Cardiac septum (tissue), 1 donor: ENCODE measurements at regions of chr16 and their contacts with region 1.

Region 1: GRCh38 chr16:2023098-2023925 is 3.4 kb upstream of the NHERF2 start:
- DNase-seq: peak; percentile 98

Region 2: DNA sequence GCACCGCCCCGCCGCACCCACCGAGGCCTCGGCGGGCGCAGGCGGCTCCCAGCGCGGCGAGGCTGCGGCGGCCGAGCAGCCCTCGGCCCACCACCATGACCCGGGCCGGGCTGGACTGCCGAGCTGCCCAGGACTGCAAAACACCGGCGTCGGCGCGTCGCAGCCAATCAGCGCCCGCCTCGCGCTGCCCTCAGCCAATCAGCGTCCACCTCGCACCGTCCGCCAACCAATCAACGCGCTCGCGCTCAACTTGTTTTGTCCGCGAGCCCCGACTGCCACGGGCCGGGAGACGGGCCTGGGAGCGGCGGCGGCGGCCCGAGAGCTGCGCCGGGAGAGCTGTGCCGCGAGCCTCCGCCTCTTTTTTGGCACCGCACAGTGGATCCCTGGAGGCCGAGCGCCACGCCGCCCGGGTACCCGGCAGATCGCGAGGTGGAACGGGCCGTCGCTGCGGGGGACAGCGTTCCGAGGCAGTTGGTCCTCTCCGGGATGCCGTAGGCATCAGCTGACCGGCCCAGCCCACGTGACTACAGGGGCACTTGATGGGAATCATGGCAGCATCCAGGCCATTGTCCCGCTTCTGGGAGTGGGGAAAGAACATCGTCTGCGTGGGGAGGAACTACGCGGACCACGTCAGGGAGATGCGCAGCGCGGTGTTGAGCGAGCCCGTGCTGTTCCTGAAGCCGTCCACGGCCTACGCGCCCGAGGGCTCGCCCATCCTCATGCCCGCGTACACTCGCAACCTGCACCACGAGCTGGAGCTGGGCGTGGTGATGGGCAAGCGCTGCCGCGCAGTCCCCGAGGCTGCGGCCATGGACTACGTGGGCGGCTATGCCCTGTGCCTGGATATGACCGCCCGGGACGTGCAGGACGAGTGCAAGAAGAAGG is 196.4 kb before region 1 on chr16 and contains the starts of genes FAHD1 and HAGH:
- intact Hi-C with region 1: no loop called
- DNase-seq: peak; percentile 97
- total RNA-seq, gene FAHD1: 20.5 TPM
- total RNA-seq, gene HAGH: 166 TPM

Region 3: GRCh38 chr16:2047330-2048115 is 24.2 kb after region 1 on chr16 and contains the starts of genes NTHL1 and TSC2:
- intact Hi-C with region 1: loop called (anchors 2 kb)
- DNase-seq: peak; percentile 98
- total RNA-seq, gene NTHL1: 10.4 TPM
- total RNA-seq, gene TSC2: 73.3 TPM

Region 4: GRCh38 chr16:2082160-2082982 is 59.1 kb after region 1 on chr16:
- intact Hi-C with region 1: loop called (anchors 5 kb)
- DNase-seq: no peak

Region 5: DNA sequence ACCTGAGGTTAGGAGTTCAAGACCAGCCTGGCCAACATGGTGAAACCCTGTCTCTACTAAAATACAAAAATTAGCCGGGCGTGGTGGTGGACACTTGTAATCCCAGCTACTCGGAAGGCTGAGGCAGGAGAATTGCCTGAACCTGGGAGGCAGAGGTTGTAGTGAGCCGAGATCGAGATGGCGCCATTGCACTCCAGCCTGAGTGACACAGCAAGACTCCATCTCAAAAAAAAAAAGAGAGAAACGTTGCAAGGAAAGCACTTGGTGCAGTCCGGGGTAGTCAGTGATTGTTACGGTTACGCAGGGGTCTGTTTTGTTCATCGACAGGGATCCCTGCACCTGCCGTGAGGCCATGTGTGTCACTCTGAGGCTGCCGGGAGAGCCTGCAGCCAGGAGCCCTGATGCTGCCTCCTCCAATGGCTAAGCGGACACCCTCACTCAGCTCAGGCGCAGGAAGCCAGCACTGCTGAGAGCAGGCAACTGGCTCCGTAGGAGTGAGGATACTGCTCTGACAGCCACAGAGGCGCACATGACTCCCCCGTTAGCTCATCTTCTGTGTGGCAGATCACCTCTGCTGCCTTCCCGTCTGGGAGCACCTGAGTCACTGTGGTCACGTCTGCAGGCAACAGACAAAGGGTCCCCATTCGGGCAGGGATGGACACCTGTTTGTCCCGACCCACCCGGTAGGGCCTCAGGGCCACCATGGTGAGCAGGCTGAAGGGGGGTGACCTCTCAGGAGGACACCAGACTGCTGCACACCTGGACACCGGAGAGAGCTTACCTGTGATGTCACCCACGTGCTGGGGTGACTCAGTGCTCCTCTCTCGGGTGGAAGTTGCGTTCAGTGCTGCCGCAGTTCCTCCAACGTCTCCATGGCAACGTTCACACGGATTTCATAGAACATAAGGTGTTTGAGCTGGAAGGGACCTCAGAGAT is 119.9 kb after region 1 on chr16:
- intact Hi-C with region 1: loop called (anchors 1 kb)
- DNase-seq: no peak

Region 6: GRCh38 chr16:2500918-2501750 is 477.8 kb after region 1 on chr16:
- intact Hi-C with region 1: loop called (anchors 10 kb)
- DNase-seq: peak; percentile 91

Region 7: GRCh38 chr16:3074860-3075522 is 1051.7 kb after region 1 on chr16:
- intact Hi-C with region 1: no loop called
- DNase-seq: peak; percentile 89